CD8-positive, alpha-beta memory T cell (primary cell): ENCODE measurements at regions of chr5 and their contacts with region 1.

Region 1: DNA sequence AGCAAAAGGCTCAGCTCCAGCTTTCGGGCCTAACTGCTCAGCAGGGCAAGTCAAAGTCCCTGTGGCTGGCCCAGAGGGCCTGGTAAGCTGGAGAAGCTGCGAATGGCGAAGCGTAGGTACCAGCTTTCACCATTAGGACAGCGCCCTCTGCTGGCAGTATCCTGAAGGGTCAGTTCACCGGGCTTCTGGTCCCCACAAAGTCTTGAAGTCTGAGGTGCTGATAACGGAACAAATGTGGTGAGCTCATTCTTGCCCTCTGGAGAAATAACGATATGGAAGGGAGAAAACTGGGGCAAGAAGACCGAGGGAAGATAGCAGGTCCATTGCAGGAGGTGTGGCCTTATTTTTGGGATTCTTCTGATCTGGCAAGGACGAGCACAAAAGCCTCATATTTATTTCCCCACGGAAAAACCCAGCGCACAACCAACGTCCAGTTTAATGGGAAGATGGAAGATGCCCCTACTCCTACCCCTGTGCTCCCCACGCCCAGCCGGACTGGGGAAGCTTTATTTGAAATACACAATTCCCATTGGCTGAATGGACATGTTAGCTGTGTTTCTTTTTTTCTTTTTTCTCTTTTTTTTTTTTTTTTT is 7.2 kb downstream of the SOWAHA start:
- DNase-seq: peak; percentile 73 to 90 (median 80)
- H3K4me3 ChIP-seq: no peak overlapping the region
- H3K4me3 Mint-ChIP-seq: peak overlapping the region in 1 of 7 donors; percentile 69
- H3K27ac ChIP-seq: no peak overlapping the region
- H3K27ac Mint-ChIP-seq: peak overlapping the region in 3 of 8 donors; percentile 1 to 72 (median 48)
- H3K4me1 ChIP-seq: peaks cover 6% of the 10 kb centered on the region
- H3K4me1 Mint-ChIP-seq: peaks cover 0 to 6% (median 6%) of the 10 kb centered on the region in 3 donors
- H3K27me3 ChIP-seq: peaks cover 15% of the 10 kb centered on the region
- H3K27me3 Mint-ChIP-seq: peaks cover 24 to 34% of the 10 kb centered on the region in 2 donors

Region 2: DNA sequence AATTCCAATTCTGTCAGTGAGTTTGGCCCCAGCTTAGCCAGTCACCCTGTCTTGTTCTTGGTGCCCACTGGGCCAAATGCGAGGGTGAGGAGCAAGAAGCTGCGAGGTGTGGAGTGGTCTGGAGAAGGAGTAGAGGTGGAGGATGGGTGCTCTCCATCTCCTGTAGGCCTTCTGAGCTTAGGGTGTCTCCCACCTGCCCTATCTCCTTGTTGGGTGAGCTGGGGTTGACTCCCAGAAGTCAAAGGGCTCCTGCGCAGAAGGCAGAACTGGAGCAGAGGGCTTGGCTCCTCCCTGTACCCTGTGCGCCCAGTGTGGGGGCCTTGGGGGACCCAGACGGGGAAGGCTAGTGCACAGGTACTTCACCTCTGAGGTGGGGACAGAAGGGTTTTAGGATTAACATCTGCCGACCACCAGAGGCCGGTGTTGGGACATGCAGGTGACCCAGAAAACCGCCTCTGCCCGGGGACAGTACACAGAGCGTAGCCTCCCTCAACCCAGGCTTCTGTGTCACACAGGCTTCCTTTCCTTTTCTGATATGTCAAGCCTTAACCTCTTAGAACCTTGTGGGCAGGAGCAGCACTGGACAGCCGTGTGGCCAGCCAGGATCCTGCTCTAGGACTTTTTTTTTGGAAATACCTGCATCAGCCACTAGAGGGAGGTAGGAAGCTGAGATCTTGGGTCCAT is 293.8 kb before region 1 on chr5:
- CTCF ChIA-PET with region 1: interaction called, 22 read pairs
- POLR2A ChIA-PET with region 1: no interaction called
- DNase-seq: peak in 4 of 5 donors; percentile 5 to 50 (median 44)
- H3K4me3 ChIP-seq: no peak overlapping the region
- H3K4me3 Mint-ChIP-seq: peak overlapping the region in 2 of 7 donors; percentile 25 to 71
- H3K27ac ChIP-seq: no peak overlapping the region
- H3K27ac Mint-ChIP-seq: no peak overlapping the region
- H3K4me1 ChIP-seq: peaks cover 6% of the 10 kb centered on the region
- H3K4me1 Mint-ChIP-seq: peaks cover 4 to 19% (median 10%) of the 10 kb centered on the region in 3 donors
- H3K27me3 ChIP-seq: no peaks in the 10 kb centered on the region
- H3K27me3 Mint-ChIP-seq: peaks cover 2 to 5% of the 10 kb centered on the region in 2 donors

Region 3: DNA sequence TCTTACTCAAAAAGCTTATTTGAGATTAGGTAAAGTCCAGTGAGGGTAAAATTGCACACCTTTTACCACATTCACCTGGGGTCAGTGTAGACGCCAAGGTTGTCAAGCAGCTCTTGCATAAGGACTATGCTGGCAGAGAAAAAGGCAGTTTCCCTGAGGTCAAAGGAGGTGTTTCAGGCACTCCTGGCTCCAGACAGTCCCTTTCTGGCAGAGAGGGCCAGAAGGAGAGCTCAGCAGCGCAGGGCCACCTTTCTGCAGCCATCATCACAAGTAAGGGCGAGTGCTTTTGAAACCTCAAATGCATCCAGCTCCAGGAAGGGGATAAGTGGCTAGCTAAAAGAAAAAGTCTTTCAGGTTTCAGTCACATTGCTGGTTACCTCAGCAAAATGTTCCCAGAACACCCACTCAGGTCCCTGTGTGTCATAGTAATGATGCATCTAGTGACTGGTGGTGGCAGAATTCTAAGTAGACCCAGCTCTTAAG is 179.0 kb before region 1 on chr5:
- CTCF ChIA-PET with region 1: no interaction called
- POLR2A ChIA-PET with region 1: no interaction called
- DNase-seq: no peak
- H3K4me3 ChIP-seq: no peak overlapping the region
- H3K4me3 Mint-ChIP-seq: no peak overlapping the region
- H3K27ac ChIP-seq: no peak overlapping the region
- H3K27ac Mint-ChIP-seq: no peak overlapping the region
- H3K4me1 ChIP-seq: no peaks in the 10 kb centered on the region
- H3K4me1 Mint-ChIP-seq: peaks cover 0 to 3% (median 0%) of the 10 kb centered on the region in 3 donors
- H3K27me3 ChIP-seq: no peaks in the 10 kb centered on the region
- H3K27me3 Mint-ChIP-seq: no peaks in the 10 kb centered on the region

Region 4: GRCh38 chr5:132746954-132747615 is 73.2 kb before region 1 on chr5 and contains the start of gene CCNI2:
- CTCF ChIA-PET with region 1: interaction called, 29 read pairs
- POLR2A ChIA-PET with region 1: interaction called, 3 read pairs
- DNase-seq: peak; percentile 54 to 82 (median 70)
- H3K4me3 ChIP-seq: peak within 1 kb of the TSS; percentile 57
- H3K4me3 Mint-ChIP-seq: peak within 1 kb of the TSS; percentile 64 to 93 (median 82)
- H3K27ac ChIP-seq: peak within 1 kb of the TSS; percentile 38
- H3K27ac Mint-ChIP-seq: peak within 1 kb of the TSS; percentile 7 to 94 (median 72)
- H3K4me1 ChIP-seq: no peaks in the 10 kb centered on the region
- H3K4me1 Mint-ChIP-seq: peaks cover 7 to 29% (median 9%) of the 10 kb centered on the region in 3 donors
- H3K27me3 ChIP-seq: no peaks in the 10 kb centered on the region
- H3K27me3 Mint-ChIP-seq: peaks cover 0 to 3% of the 10 kb centered on the region in 2 donors
- total RNA-seq, gene CCNI2: 8.8 to 9.1 TPM

Region 5: GRCh38 chr5:132753135-132753987 is 66.9 kb before region 1 on chr5:
- CTCF ChIA-PET with region 1: interaction called, 29 read pairs
- POLR2A ChIA-PET with region 1: no interaction called
- DNase-seq: no peak
- H3K4me3 ChIP-seq: no peak overlapping the region
- H3K4me3 Mint-ChIP-seq: no peak overlapping the region
- H3K27ac ChIP-seq: no peak overlapping the region
- H3K27ac Mint-ChIP-seq: peak overlapping the region in 2 of 8 donors; percentile 0 to 43
- H3K4me1 ChIP-seq: no peaks in the 10 kb centered on the region
- H3K4me1 Mint-ChIP-seq: peaks cover 8 to 24% (median 9%) of the 10 kb centered on the region in 3 donors
- H3K27me3 ChIP-seq: no peaks in the 10 kb centered on the region
- H3K27me3 Mint-ChIP-seq: no peaks in the 10 kb centered on the region

Region 6: DNA sequence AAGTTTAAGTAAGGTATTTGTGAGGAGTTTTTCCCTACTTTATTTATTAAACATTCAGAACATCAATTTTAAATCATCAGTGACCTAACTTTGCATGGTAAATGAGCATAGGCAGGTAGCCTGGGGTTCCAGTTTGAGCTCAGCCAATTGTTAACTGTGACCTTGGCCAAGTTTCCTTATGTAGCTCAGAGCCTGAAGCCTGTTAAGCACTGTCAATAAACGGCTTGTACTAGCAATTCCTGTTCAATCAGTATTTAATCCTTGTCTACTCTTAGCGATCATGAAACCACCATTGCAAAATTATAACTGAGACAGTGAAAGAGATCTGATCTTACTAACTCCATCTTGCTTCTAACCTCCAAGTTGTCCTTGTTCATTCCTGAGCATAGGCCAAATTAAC is 11.8 kb before region 1 on chr5:
- CTCF ChIA-PET with region 1: interaction called, 12 read pairs
- POLR2A ChIA-PET with region 1: no interaction called
- DNase-seq: no peak
- H3K4me3 ChIP-seq: no peak overlapping the region
- H3K4me3 Mint-ChIP-seq: no peak overlapping the region
- H3K27ac ChIP-seq: no peak overlapping the region
- H3K27ac Mint-ChIP-seq: no peak overlapping the region
- H3K4me1 ChIP-seq: peaks cover 7% of the 10 kb centered on the region
- H3K4me1 Mint-ChIP-seq: peaks cover 7 to 11% (median 11%) of the 10 kb centered on the region in 3 donors
- H3K27me3 ChIP-seq: peaks cover 22% of the 10 kb centered on the region
- H3K27me3 Mint-ChIP-seq: peaks cover 50 to 67% of the 10 kb centered on the region in 2 donors

Region 7: GRCh38 chr5:133015466-133015865 is 195.2 kb after region 1 on chr5:
- CTCF ChIA-PET with region 1: no interaction called
- POLR2A ChIA-PET with region 1: no interaction called
- DNase-seq: no peak
- H3K4me3 ChIP-seq: no peak overlapping the region
- H3K4me3 Mint-ChIP-seq: no peak overlapping the region
- H3K27ac ChIP-seq: no peak overlapping the region
- H3K27ac Mint-ChIP-seq: no peak overlapping the region
- H3K4me1 ChIP-seq: no peaks in the 10 kb centered on the region
- H3K4me1 Mint-ChIP-seq: peaks cover 3 to 10% (median 5%) of the 10 kb centered on the region in 3 donors
- H3K27me3 ChIP-seq: no peaks in the 10 kb centered on the region
- H3K27me3 Mint-ChIP-seq: no peaks in the 10 kb centered on the region